ENCODE measurements at regions of chr15 and their contacts with region 1.

Region 1: GRCh38 chr15:95259513-95259912 is 1028.2 kb downstream of the MCTP2 start:
- DNase-seq: peak; percentile 92
- H3K4me3 ChIP-seq: no peak overlapping the region
- H3K27ac ChIP-seq: peak overlapping the region; percentile 89
- H3K4me1 ChIP-seq: peaks cover 46% of the 10 kb centered on the region
- H3K27me3 ChIP-seq: no peaks in the 10 kb centered on the region
- CTCF ChIP-seq: peak; percentile 71
- POLR2A ChIP-seq: no peak

Region 2: GRCh38 chr15:95025924-95026728 is 233.4 kb before region 1 on chr15:
- CTCF ChIA-PET with region 1: interaction called, 34 read pairs
- POLR2A ChIA-PET with region 1: no interaction called
- dilution Hi-C with region 1: no loop called
- intact Hi-C with region 1: loop called (anchors 1 kb)
- DNase-seq: peak; percentile 78
- H3K4me3 ChIP-seq: no peak overlapping the region
- H3K27ac ChIP-seq: no peak overlapping the region
- H3K4me1 ChIP-seq: peaks cover 2% of the 10 kb centered on the region
- H3K27me3 ChIP-seq: no peaks in the 10 kb centered on the region
- CTCF ChIP-seq: peak; percentile 62 to 76
- POLR2A ChIP-seq: no peak

Region 3: DNA sequence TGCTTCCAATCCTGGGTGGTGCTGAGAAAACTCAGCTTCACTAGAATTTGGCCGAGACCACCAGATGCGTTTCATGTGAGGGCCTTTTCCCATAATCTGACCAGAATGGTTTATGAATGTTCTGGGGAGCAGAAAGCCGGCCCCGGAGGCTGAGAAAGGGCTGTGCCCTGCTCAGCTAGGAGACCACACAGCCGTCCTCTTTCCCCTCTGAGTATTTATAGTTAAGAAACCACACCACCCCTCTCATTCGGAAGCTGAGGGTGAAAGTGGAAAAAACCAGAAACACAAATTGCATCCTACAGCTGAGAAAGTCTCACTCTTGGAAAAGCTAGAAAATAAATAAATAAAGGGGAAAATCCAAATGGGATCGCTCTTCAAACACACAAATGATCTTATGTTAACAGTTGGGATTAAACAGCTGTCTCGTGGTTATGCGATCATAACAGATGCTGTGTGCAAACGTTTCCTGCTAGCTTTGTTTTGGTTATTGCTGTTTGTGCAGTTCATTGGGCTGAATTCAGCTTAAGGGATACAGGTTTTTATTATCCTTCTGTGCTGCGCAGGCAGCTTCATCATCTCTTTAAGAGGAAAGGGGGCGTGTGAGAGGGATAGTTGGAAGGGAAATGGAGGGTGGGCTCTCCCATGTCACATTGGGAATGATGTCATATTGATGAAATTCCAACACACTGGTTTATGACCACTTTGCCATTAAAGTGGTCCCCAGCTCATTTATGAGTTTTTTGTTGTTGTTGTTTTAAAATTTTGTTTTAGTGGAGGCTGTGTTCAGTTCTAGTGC is 44.8 kb after region 1 on chr15:
- CTCF ChIA-PET with region 1: interaction called, 6 read pairs
- POLR2A ChIA-PET with region 1: interaction called, 6 read pairs
- dilution Hi-C with region 1: no loop called
- intact Hi-C with region 1: loop called (anchors 1 kb)
- DNase-seq: peak; percentile 98
- H3K4me3 ChIP-seq: no peak overlapping the region
- H3K27ac ChIP-seq: peak overlapping the region; percentile 97
- H3K4me1 ChIP-seq: peaks cover 52% of the 10 kb centered on the region
- H3K27me3 ChIP-seq: no peaks in the 10 kb centered on the region
- CTCF ChIP-seq: no peak
- POLR2A ChIP-seq: no peak

Region 4: DNA sequence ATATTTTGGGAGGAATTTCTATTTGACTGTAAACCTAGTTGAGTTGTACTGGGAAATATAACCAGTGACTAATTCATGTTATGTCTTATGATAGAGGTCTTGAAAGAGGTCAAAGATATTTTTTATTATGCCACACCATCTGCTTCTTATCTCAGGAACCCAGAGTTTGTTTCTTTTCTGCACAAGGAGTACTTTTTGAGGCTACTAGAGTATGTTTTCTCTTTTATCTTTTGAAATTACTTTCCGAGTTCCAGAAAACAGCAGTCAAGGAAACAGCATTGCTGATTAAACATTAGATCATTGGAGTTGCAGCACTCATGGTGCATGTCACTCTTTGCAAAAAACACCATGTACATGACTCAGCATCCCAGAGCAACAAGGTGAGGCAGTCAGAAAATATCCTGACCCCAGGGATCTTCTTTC is 425.2 kb after region 1 on chr15:
- CTCF ChIA-PET with region 1: no interaction called
- POLR2A ChIA-PET with region 1: no interaction called
- dilution Hi-C with region 1: no loop called
- intact Hi-C with region 1: loop called (anchors 1 kb)
- DNase-seq: peak; percentile 97
- H3K4me3 ChIP-seq: no peak overlapping the region
- H3K27ac ChIP-seq: peak overlapping the region; percentile 66
- H3K4me1 ChIP-seq: peaks cover 22% of the 10 kb centered on the region
- H3K27me3 ChIP-seq: no peaks in the 10 kb centered on the region
- CTCF ChIP-seq: no peak
- POLR2A ChIP-seq: peak; percentile 66

Region 5: GRCh38 chr15:96234109-96234892 is 974.8 kb after region 1 on chr15:
- CTCF ChIA-PET with region 1: no interaction called
- POLR2A ChIA-PET with region 1: no interaction called
- dilution Hi-C with region 1: no loop called
- intact Hi-C with region 1: loop called (anchors 5 kb)
- DNase-seq: no peak
- H3K4me3 ChIP-seq: no peak overlapping the region
- H3K27ac ChIP-seq: no peak overlapping the region
- H3K4me1 ChIP-seq: peaks cover 15% of the 10 kb centered on the region
- H3K27me3 ChIP-seq: no peaks in the 10 kb centered on the region
- CTCF ChIP-seq: no peak
- POLR2A ChIP-seq: no peak

Region 6: GRCh38 chr15:96893159-96893906 is 1633.8 kb after region 1 on chr15:
- CTCF ChIA-PET with region 1: no interaction called
- POLR2A ChIA-PET with region 1: no interaction called
- dilution Hi-C with region 1: no loop called
- intact Hi-C with region 1: loop called (anchors 5 kb)
- DNase-seq: peak; percentile 80
- H3K4me3 ChIP-seq: no peak overlapping the region
- H3K27ac ChIP-seq: no peak overlapping the region
- H3K4me1 ChIP-seq: peaks cover 4% of the 10 kb centered on the region
- H3K27me3 ChIP-seq: no peaks in the 10 kb centered on the region
- CTCF ChIP-seq: peak; percentile 62 to 70
- POLR2A ChIP-seq: no peak